Activated B cell treated with CpG ODN at 0.5 μM for 24 hours (primary cell): ENCODE measurements at regions of chr11 and their contacts with region 1.

Region 1: GRCh38 chr11:55854704-55855103 is 16.2 kb downstream of the OR5D16 start:
- DNase-seq: no peak
- ATAC-seq: no peak
- H3K4me3 Mint-ChIP-seq: no peak overlapping the region
- H3K27ac Mint-ChIP-seq: no peak overlapping the region
- H3K4me1 Mint-ChIP-seq: no peaks in the 10 kb centered on the region
- H3K27me3 Mint-ChIP-seq: no peaks in the 10 kb centered on the region
- CTCF ChIP-seq: no peak

Region 2: GRCh38 chr11:55902303-55902702 is 47.6 kb after region 1 on chr11:
- CTCF ChIA-PET with region 1: no interaction called
- POLR2A ChIA-PET with region 1: no interaction called
- intact Hi-C with region 1: loop called (anchors 5 kb)
- DNase-seq: no peak
- ATAC-seq: no peak
- H3K4me3 Mint-ChIP-seq: no peak overlapping the region
- H3K27ac Mint-ChIP-seq: no peak overlapping the region
- H3K4me1 Mint-ChIP-seq: no peaks in the 10 kb centered on the region
- H3K27me3 Mint-ChIP-seq: no peaks in the 10 kb centered on the region
- CTCF ChIP-seq: no peak